Posterior vena cava (tissue), 2 donors: ENCODE measurements at regions of chr1 and their contacts with region 1.

Region 1: GRCh38 chr1:119010201-119010600 is 22.1 kb upstream of the TBX15 start:
- DNase-seq: peak; percentile 25

Region 2: GRCh38 chr1:118151312-118151937 is 858.8 kb before region 1 on chr1:
- intact Hi-C with region 1: loop called in 1 of 2 experiments (anchors 5 kb)
- DNase-seq: peak; percentile 74

Region 3: GRCh38 chr1:118989878-118990378 is 20.3 kb before region 1 on chr1:
- intact Hi-C with region 1: no loop called
- DNase-seq: no peak